ENCODE measurements at regions of chr12 and their contacts with region 1.

Region 1: DNA sequence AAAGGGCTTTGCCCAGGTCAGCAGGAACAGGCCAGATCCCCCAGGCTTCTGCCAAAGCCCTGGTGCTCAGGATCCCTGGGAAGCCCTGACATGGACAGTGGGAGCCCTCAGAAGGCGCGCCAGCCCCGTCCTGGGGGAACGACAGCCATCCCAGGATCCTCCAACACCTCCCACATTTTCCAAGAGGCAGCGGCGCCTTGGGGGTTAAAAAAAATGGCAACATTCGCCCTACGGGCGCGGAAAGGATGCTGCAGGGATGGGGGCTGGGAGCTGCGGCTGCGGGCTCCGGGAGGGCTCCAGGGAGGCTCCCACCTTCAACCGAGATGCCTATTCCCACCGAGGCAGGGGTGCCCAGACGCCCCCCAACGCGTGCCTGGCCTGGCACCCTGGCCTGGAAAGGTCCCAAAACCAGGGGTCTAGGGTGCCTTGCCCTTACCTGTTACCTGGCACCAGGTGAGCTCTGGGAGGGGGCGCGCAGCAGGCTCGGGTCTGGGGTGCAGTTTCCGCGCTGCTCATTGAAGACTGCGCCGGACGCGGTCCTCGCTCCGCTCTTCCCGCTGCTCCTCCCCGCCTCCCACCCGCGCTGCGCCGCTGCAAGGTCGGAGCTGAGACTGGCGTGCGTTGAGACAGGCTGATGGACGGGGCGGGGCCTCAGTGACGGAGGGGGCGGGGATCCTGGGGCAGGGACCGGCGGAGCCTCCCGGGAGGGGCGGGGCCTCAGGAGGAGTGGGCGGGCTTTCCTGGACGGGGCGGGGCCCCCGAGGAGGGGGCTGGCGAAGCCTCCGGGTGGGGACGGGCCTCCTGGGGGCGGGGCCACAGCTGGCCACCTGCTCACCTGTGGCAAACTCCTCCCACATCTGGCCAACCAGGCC is at the start of gene ABCB9:
- DNase-seq: peak; percentile 78 to 95 (median 85)
- ATAC-seq: peak; percentile 99
- H3K4me3 ChIP-seq: peak within 1 kb of the TSS; percentile 80
- H3K4me3 Mint-ChIP-seq: peak within 1 kb of the TSS; percentile 47 to 84 (median 76)
- H3K27ac ChIP-seq: peak within 1 kb of the TSS; percentile 67
- H3K27ac Mint-ChIP-seq: peak within 1 kb of the TSS in 8 of 9 donors; percentile 22 to 90 (median 70)
- H3K4me1 ChIP-seq: peaks cover 10 to 15% of the 10 kb centered on the region in 2 donors
- H3K4me1 Mint-ChIP-seq: peaks cover 5 to 20% (median 12%) of the 10 kb centered on the region in 7 donors
- H3K27me3 ChIP-seq: no peaks in the 10 kb centered on the region
- H3K27me3 Mint-ChIP-seq: no peaks in the 10 kb centered on the region
- total RNA-seq, gene ABCB9: 6.2 to 8.9 (median 7.1) TPM

Region 2: GRCh38 chr12:122980183-122981046 is 14.3 kb after region 1 on chr12 and contains the start of gene ARL6IP4:
- CTCF ChIA-PET with region 1: no interaction called
- POLR2A ChIA-PET with region 1: interaction called, 31 read pairs
- intact Hi-C with region 1: loop called in 1 of 2 experiments (anchors 1 kb)
- DNase-seq: peak; percentile 46 to 72 (median 63)
- ATAC-seq: peak; percentile 81
- H3K4me3 ChIP-seq: peak within 1 kb of the TSS; percentile 84
- H3K4me3 Mint-ChIP-seq: peak within 1 kb of the TSS; percentile 86 to 95 (median 90)
- H3K27ac ChIP-seq: peak within 1 kb of the TSS; percentile 81
- H3K27ac Mint-ChIP-seq: peak within 1 kb of the TSS; percentile 81 to 92 (median 87)
- H3K4me1 ChIP-seq: peaks cover 41 to 46% of the 10 kb centered on the region in 2 donors
- H3K4me1 Mint-ChIP-seq: peaks cover 39 to 73% (median 53%) of the 10 kb centered on the region in 7 donors
- H3K27me3 ChIP-seq: no peaks in the 10 kb centered on the region
- H3K27me3 Mint-ChIP-seq: no peaks in the 10 kb centered on the region
- total RNA-seq, gene ARL6IP4: 137 to 189 (median 169) TPM